CD4-positive, alpha-beta T cell (primary cell): ENCODE measurements at regions of chr1 and their contacts with region 1.

Region 1: GRCh38 chr1:25796811-25797458 is 3.1 kb upstream of the SELENON start:
- DNase-seq: peak; percentile 75 to 92 (median 82)
- ATAC-seq: peak; percentile 65
- H3K4me3 ChIP-seq: no peak overlapping the region
- H3K4me3 Mint-ChIP-seq: peak overlapping the region; percentile 85
- H3K27ac ChIP-seq: peak overlapping the region; percentile 44 to 47
- H3K27ac Mint-ChIP-seq: peak overlapping the region; percentile 89
- H3K4me1 ChIP-seq: peaks cover 67% of the 10 kb centered on the region
- H3K4me1 Mint-ChIP-seq: peaks cover 67% of the 10 kb centered on the region
- H3K27me3 ChIP-seq: no peaks in the 10 kb centered on the region
- H3K27me3 Mint-ChIP-seq: no peaks in the 10 kb centered on the region
- CTCF ChIP-seq: peak; percentile 75

Region 2: GRCh38 chr1:25543425-25544242 is 253.3 kb before region 1 on chr1 and contains the start of gene LDLRAP1:
- CTCF ChIA-PET with region 1: no interaction called
- POLR2A ChIA-PET with region 1: no interaction called
- intact Hi-C with region 1: loop called in 1 of 2 experiments (anchors 5 kb)
- DNase-seq: peak in 12 of 14 experiments; percentile 28 to 81 (median 56)
- ATAC-seq: peak; percentile 71
- H3K4me3 ChIP-seq: peak within 1 kb of the TSS; percentile 90
- H3K4me3 Mint-ChIP-seq: peak within 1 kb of the TSS; percentile 96
- H3K27ac ChIP-seq: peak within 1 kb of the TSS; percentile 55 to 60
- H3K27ac Mint-ChIP-seq: peak within 1 kb of the TSS; percentile 87
- H3K4me1 ChIP-seq: peaks cover 50% of the 10 kb centered on the region
- H3K4me1 Mint-ChIP-seq: peaks cover 47% of the 10 kb centered on the region
- H3K27me3 ChIP-seq: no peaks in the 10 kb centered on the region
- H3K27me3 Mint-ChIP-seq: no peaks in the 10 kb centered on the region
- CTCF ChIP-seq: no peak
- total RNA-seq, gene LDLRAP1: 70.5 to 73.5 TPM

Region 3: GRCh38 chr1:25608488-25609178 is 188.3 kb before region 1 on chr1:
- CTCF ChIA-PET with region 1: interaction called, 8 read pairs
- POLR2A ChIA-PET with region 1: interaction called, 5 read pairs
- intact Hi-C with region 1: loop called (anchors 1 to 2 kb)
- DNase-seq: peak; percentile 78 to 95 (median 86)
- ATAC-seq: peak; percentile 99
- H3K4me3 ChIP-seq: peak overlapping the region; percentile 6
- H3K4me3 Mint-ChIP-seq: peak overlapping the region; percentile 45
- H3K27ac ChIP-seq: no peak overlapping the region
- H3K27ac Mint-ChIP-seq: no peak overlapping the region
- H3K4me1 ChIP-seq: peaks cover 17% of the 10 kb centered on the region
- H3K4me1 Mint-ChIP-seq: peaks cover 25% of the 10 kb centered on the region
- H3K27me3 ChIP-seq: no peaks in the 10 kb centered on the region
- H3K27me3 Mint-ChIP-seq: no peaks in the 10 kb centered on the region
- CTCF ChIP-seq: peak; percentile 71

Region 4: DNA sequence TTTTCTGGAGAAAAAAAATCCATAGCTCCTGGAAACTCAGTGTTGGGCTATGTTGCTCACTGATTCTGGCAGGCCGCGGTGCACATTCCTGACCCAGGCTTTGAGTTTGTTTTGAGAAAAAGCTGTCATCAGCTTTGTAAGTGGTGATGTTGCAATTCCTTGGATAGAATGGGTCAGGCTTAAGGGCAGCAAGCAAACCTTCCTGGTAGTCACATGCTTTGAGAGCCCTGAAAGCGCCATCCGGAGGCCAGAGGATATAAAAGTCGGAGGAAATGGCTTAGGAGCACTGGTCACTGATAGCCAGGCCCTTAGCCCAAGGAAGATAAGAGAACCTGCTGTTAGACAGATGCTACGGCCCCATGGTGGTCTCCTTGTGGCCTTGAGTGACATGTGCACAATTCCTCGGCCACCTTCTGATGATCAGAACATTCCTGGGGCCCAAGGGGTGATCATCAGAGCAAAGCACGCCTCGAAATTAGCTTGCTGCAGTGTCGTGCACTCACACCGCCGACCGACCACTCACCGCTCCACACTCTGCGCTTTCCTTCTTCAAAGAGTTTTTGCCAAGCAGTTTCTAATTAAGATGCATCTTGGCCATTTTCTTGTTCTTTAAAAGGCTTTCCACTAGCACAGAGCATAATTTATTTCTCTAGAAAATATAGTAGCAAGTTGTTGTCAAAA is 101.7 kb before region 1 on chr1:
- CTCF ChIA-PET with region 1: interaction called, 3 read pairs
- POLR2A ChIA-PET with region 1: no interaction called
- intact Hi-C with region 1: loop called (anchors 5 kb)
- DNase-seq: no peak
- ATAC-seq: no peak
- H3K4me3 ChIP-seq: no peak overlapping the region
- H3K4me3 Mint-ChIP-seq: no peak overlapping the region
- H3K27ac ChIP-seq: peak overlapping the region in 1 of 2 donors; percentile 39
- H3K27ac Mint-ChIP-seq: peak overlapping the region; percentile 74
- H3K4me1 ChIP-seq: peaks cover 48% of the 10 kb centered on the region
- H3K4me1 Mint-ChIP-seq: peaks cover 73% of the 10 kb centered on the region
- H3K27me3 ChIP-seq: no peaks in the 10 kb centered on the region
- H3K27me3 Mint-ChIP-seq: no peaks in the 10 kb centered on the region
- CTCF ChIP-seq: no peak

Region 5: DNA sequence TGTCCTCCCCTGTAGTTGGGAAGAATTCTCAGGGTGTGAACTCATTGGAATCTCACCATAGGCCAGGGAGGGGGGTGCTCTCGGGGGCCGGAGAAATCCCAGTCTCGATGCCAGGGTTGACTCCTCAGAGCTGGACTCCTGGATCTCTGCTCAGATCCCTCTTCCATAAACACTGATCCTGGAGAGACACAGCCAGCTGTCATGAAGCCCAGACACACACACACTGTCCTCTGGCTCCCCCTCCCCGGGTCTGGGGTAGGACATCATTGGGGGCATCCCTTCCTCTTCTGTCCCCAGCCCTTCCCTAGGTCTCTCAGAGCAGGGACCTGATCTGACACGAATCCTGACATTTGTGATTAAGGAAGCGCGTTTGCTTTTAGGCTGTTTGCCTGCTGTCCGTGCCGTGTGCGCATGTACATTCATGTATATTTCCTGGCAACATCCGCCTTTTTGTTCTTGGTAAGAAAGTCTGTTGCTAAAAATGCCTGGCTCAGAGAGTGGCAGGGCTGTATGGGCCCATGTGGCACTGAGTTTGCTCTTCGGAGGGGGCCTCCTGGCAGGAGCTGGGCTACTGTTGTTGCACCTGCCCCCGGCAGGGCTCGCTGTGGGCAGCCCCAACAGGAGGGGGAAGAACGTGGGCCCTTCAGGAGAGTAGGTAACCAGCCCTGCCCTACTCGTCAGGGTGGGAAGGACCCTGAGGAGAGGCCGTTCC is 42.3 kb before region 1 on chr1:
- CTCF ChIA-PET with region 1: interaction called, 3 read pairs
- POLR2A ChIA-PET with region 1: no interaction called
- intact Hi-C with region 1: loop called in 1 of 2 experiments (anchors 1 kb)
- DNase-seq: peak in 10 of 14 experiments; percentile 15 to 69 (median 48)
- ATAC-seq: peak; percentile 96
- H3K4me3 ChIP-seq: no peak overlapping the region
- H3K4me3 Mint-ChIP-seq: peak overlapping the region; percentile 44
- H3K27ac ChIP-seq: peak overlapping the region; percentile 17 to 63
- H3K27ac Mint-ChIP-seq: peak overlapping the region; percentile 99
- H3K4me1 ChIP-seq: peaks cover 45% of the 10 kb centered on the region
- H3K4me1 Mint-ChIP-seq: peaks cover 62% of the 10 kb centered on the region
- H3K27me3 ChIP-seq: no peaks in the 10 kb centered on the region
- H3K27me3 Mint-ChIP-seq: no peaks in the 10 kb centered on the region
- CTCF ChIP-seq: peak; percentile 15

Region 6: GRCh38 chr1:27428316-27429028 is 1631.5 kb after region 1 on chr1:
- CTCF ChIA-PET with region 1: no interaction called
- POLR2A ChIA-PET with region 1: no interaction called
- intact Hi-C with region 1: no loop called
- DNase-seq: peak in 2 of 14 experiments; percentile 17 to 30
- ATAC-seq: peak; percentile 27
- H3K4me3 ChIP-seq: peak overlapping the region; percentile 37
- H3K4me3 Mint-ChIP-seq: peak overlapping the region; percentile 84
- H3K27ac ChIP-seq: peak overlapping the region; percentile 49 to 54
- H3K27ac Mint-ChIP-seq: peak overlapping the region; percentile 86
- H3K4me1 ChIP-seq: peaks cover 70% of the 10 kb centered on the region
- H3K4me1 Mint-ChIP-seq: peaks cover 86% of the 10 kb centered on the region
- H3K27me3 ChIP-seq: no peaks in the 10 kb centered on the region
- H3K27me3 Mint-ChIP-seq: no peaks in the 10 kb centered on the region
- CTCF ChIP-seq: no peak